GM12878 (cell line): ENCODE measurements at regions of chr2 and their contacts with region 1.

Region 1: DNA sequence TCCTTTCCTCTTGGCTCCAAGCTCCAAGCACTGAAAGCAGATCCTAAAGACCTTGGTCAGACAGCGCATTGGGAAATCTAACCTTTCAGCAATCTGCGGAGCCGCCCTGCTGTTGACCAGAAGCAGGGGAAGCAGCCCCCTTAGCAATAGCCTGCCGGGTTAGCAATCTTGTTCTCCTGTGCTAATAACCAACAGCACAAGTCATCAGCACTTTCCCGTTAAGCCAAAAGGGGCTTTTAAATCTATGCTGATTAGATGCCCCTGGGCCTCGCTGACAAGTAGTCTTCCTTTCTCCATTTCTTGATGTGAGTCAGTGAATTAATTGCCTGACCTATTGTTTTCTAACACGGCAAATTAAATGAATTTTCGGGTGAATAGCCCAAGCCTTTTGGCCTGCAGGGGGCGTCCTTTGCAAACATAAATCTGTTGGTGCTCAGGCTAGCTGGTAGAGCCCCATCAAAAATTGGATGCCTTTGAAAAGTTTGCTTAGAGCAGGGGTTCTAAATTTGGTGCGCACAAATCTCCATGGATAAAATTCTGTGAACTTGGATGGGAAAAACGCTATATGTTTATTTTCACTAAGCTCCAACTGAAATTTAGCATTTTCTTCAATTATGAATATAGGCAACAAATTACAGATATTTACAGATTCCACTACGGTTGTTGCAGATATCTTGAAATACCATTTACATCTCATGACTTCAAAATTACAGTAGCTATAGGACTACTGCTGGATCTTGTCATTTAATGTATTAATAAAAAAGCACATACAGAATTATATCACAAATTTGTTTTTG is 24.6 kb downstream of the MAIP1 start:
- DNase-seq: no peak
- ATAC-seq: peak; percentile 74
- H3K4me3 ChIP-seq: no peak overlapping the region
- H3K27ac ChIP-seq: no peak overlapping the region
- H3K4me1 ChIP-seq: 0 out of 2 replicates have a peak, but pooled peaks cover 5% of the 10 kb centered on the region
- H3K27me3 ChIP-seq: no peaks in the 10 kb centered on the region
- CTCF ChIP-seq: peak; percentile 68 to 87 (median 83)
- EP300 ChIP-seq: no peak
- POLR2A ChIP-seq: no peak
- RAD21 ChIP-seq: peak; percentile 88

Region 2: GRCh38 chr2:199635951-199636350 is 344.1 kb before region 1 on chr2:
- CTCF ChIA-PET with region 1: no interaction called
- POLR2A ChIA-PET with region 1: no interaction called
- RAD21 ChIA-PET with region 1: no interaction called
- SMC1A ChIA-PET with region 1: no interaction called
- in situ Hi-C with region 1: no loop called
- intact Hi-C with region 1: no loop called
- DNase-seq: no peak
- ATAC-seq: no peak
- H3K4me3 ChIP-seq: no peak overlapping the region
- H3K27ac ChIP-seq: no peak overlapping the region
- H3K4me1 ChIP-seq: no peaks in the 10 kb centered on the region
- H3K27me3 ChIP-seq: no peaks in the 10 kb centered on the region
- CTCF ChIP-seq: no peak
- EP300 ChIP-seq: no peak
- POLR2A ChIP-seq: no peak
- RAD21 ChIP-seq: no peak

Region 3: GRCh38 chr2:199734011-199734410 is 246.0 kb before region 1 on chr2:
- CTCF ChIA-PET with region 1: no interaction called
- POLR2A ChIA-PET with region 1: no interaction called
- RAD21 ChIA-PET with region 1: no interaction called
- SMC1A ChIA-PET with region 1: no interaction called
- in situ Hi-C with region 1: no loop called
- intact Hi-C with region 1: no loop called
- DNase-seq: no peak
- ATAC-seq: no peak
- H3K4me3 ChIP-seq: no peak overlapping the region
- H3K27ac ChIP-seq: no peak overlapping the region
- H3K4me1 ChIP-seq: no peaks in the 10 kb centered on the region
- H3K27me3 ChIP-seq: peaks cover 0 to 2% of the 10 kb centered on the region in 2 experiments; a peak in 1 of 4 replicates
- CTCF ChIP-seq: no peak
- EP300 ChIP-seq: no peak
- POLR2A ChIP-seq: no peak
- RAD21 ChIP-seq: no peak

Region 4: GRCh38 chr2:200306196-200306930 is 326.3 kb after region 1 on chr2 and contains the start of gene SPATS2L:
- CTCF ChIA-PET with region 1: interaction called, 3 read pairs
- POLR2A ChIA-PET with region 1: no interaction called
- RAD21 ChIA-PET with region 1: no interaction called
- SMC1A ChIA-PET with region 1: interaction called, 3 read pairs
- in situ Hi-C with region 1: no loop called
- intact Hi-C with region 1: loop called (anchors 5 kb)
- DNase-seq: no peak
- ATAC-seq: peak; percentile 73
- H3K4me3 ChIP-seq: peak within 1 kb of the TSS; percentile 73
- H3K27ac ChIP-seq: peak within 1 kb of the TSS; percentile 70
- H3K4me1 ChIP-seq: peaks cover 4% of the 10 kb centered on the region; the same call in 1 of the 2 replicates
- H3K27me3 ChIP-seq: no peaks in the 10 kb centered on the region
- CTCF ChIP-seq: no peak
- EP300 ChIP-seq: no peak
- POLR2A ChIP-seq: peak; percentile 39
- RAD21 ChIP-seq: no peak
- polyA plus RNA-seq, gene SPATS2L: 5.2 to 8.0 TPM

Region 5: DNA sequence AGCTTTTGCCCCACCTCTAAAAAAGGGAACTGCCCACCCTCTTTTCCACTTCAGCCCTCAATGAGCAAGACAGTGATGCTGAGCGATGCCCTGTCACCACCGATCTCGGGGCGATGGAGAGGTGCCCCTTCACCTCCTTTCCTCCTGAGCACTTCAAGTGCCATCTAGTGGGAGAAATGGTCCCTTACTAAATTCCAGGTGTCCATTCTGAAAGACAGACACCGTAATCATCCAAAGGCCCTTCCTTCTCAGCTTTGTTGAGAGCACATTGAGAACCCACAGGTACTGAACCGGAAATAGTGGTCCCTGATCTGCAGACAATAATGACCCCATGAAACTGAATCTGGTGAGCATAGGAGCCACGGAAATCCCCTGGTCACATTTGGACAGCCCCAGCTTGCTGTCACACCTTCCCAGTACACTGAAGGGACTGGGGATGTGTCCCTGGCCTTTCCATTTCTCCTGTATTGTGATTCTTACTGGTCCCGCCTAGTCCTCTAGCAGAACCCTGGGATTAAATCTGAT is 491.4 kb after region 1 on chr2:
- CTCF ChIA-PET with region 1: interaction called, 50 read pairs
- POLR2A ChIA-PET with region 1: no interaction called
- RAD21 ChIA-PET with region 1: interaction called, 15 read pairs
- SMC1A ChIA-PET with region 1: interaction called, 41 read pairs
- in situ Hi-C with region 1: loop called (anchors 5 kb)
- intact Hi-C with region 1: loop called (anchors 1 kb)
- DNase-seq: peak; percentile 93
- ATAC-seq: peak; percentile 88
- H3K4me3 ChIP-seq: no peak overlapping the region
- H3K27ac ChIP-seq: peak overlapping the region; percentile 61
- H3K4me1 ChIP-seq: peaks cover 30% of the 10 kb centered on the region
- H3K27me3 ChIP-seq: no peaks in the 10 kb centered on the region
- CTCF ChIP-seq: peak; percentile 61 to 76 (median 74); a peak in 5 of 6 replicates
- EP300 ChIP-seq: peak; percentile 89 to 90
- POLR2A ChIP-seq: no peak
- RAD21 ChIP-seq: peak; percentile 89

Region 6: GRCh38 chr2:200477667-200478131 is 497.7 kb after region 1 on chr2:
- CTCF ChIA-PET with region 1: interaction called, 104 read pairs
- POLR2A ChIA-PET with region 1: no interaction called
- RAD21 ChIA-PET with region 1: interaction called, 68 read pairs
- SMC1A ChIA-PET with region 1: interaction called, 53 read pairs
- in situ Hi-C with region 1: loop called (anchors 5 kb)
- intact Hi-C with region 1: loop called (anchors 1 kb)
- DNase-seq: no peak
- ATAC-seq: no peak
- H3K4me3 ChIP-seq: no peak overlapping the region
- H3K27ac ChIP-seq: no peak overlapping the region
- H3K4me1 ChIP-seq: peaks cover 9% of the 10 kb centered on the region
- H3K27me3 ChIP-seq: no peaks in the 10 kb centered on the region
- CTCF ChIP-seq: no peak
- EP300 ChIP-seq: no peak
- POLR2A ChIP-seq: no peak
- RAD21 ChIP-seq: no peak

Region 7: DNA sequence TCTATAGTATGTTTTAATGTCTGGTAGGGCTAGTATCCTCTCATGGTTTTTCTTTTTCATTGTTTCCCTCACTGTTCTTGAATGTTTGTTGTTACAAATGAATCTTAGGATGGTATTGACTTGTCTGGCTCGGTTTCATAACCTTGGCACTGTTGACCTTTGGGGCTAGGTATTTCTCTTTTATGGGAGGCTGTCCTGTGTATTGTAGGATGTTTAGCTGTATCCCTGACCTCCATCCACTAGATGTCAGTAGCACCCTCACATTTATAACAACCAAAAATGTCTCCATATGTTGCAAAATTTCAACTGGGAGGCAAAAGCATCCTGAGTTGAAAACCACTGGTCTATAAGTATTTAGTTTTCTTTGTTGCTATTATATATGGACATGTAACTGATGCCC is 598.7 kb after region 1 on chr2:
- CTCF ChIA-PET with region 1: no interaction called
- POLR2A ChIA-PET with region 1: no interaction called
- RAD21 ChIA-PET with region 1: no interaction called
- SMC1A ChIA-PET with region 1: no interaction called
- in situ Hi-C with region 1: no loop called
- intact Hi-C with region 1: loop called (anchors 5 kb)
- DNase-seq: peak; percentile 5
- ATAC-seq: peak; percentile 87
- H3K4me3 ChIP-seq: no peak overlapping the region
- H3K27ac ChIP-seq: no peak overlapping the region
- H3K4me1 ChIP-seq: no peaks in the 10 kb centered on the region
- H3K27me3 ChIP-seq: no peaks in the 10 kb centered on the region
- CTCF ChIP-seq: peak; percentile 31 to 46 (median 45); a peak in 5 of 6 replicates
- EP300 ChIP-seq: no peak
- POLR2A ChIP-seq: no peak
- RAD21 ChIP-seq: peak; percentile 63

Region 8: GRCh38 chr2:200703127-200703925 is 723.3 kb after region 1 on chr2:
- CTCF ChIA-PET with region 1: interaction called, 14 read pairs
- POLR2A ChIA-PET with region 1: no interaction called
- RAD21 ChIA-PET with region 1: interaction called, 7 read pairs
- SMC1A ChIA-PET with region 1: interaction called, 7 read pairs
- in situ Hi-C with region 1: loop called (anchors 10 kb)
- intact Hi-C with region 1: loop called (anchors 5 kb)
- DNase-seq: peak; percentile 4
- ATAC-seq: peak; percentile 80
- H3K4me3 ChIP-seq: no peak overlapping the region
- H3K27ac ChIP-seq: no peak overlapping the region
- H3K4me1 ChIP-seq: no peaks in the 10 kb centered on the region
- H3K27me3 ChIP-seq: peaks cover 0 to 2% of the 10 kb centered on the region in 2 experiments; a peak in 1 of 4 replicates
- CTCF ChIP-seq: peak; percentile 22 to 66 (median 41); a peak in 4 of 6 replicates
- EP300 ChIP-seq: no peak
- POLR2A ChIP-seq: no peak
- RAD21 ChIP-seq: peak; percentile 85